OCI-LY7 (cell line): ENCODE measurements at regions of chr9 and their contacts with region 1.

Region 1: GRCh38 chr9:109903515-109904138 is 123.6 kb downstream of the PALM2AKAP2 start:
- DNase-seq: peak; percentile 92
- H3K4me3 ChIP-seq: no peak overlapping the region
- H3K27ac ChIP-seq: peak overlapping the region; percentile 98
- H3K4me1 ChIP-seq: peaks cover 57% of the 10 kb centered on the region
- CTCF ChIP-seq: peak; percentile 99

Region 2: GRCh38 chr9:109880277-109881169 is 23.1 kb before region 1 on chr9:
- CTCF ChIA-PET with region 1: no interaction called
- POLR2A ChIA-PET with region 1: no interaction called
- intact Hi-C with region 1: no loop called
- DNase-seq: peak; percentile 76
- H3K4me3 ChIP-seq: peak overlapping the region; percentile 25
- H3K27ac ChIP-seq: no peak overlapping the region
- H3K4me1 ChIP-seq: no peaks in the 10 kb centered on the region
- CTCF ChIP-seq: peak; percentile 85

Region 3: DNA sequence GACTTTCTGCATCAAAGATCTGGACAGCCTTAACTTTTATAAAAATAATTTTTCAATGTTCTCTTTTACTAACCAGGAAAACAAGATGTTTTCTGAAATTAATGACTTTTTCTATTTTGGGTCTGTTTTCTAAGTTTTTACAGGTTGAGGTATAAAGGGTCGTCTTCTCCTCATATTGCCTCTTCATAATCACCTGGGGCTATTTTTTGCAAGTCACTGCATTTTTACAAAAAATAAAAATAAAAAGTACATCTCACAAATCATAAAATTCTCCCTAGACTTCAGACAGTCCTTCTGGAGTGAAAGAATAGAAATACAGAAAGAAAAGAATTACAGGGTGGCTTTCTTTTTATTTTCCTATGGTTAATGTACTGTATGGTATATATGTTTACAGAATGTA is 44.8 kb after region 1 on chr9:
- CTCF ChIA-PET with region 1: interaction called, 4 read pairs
- POLR2A ChIA-PET with region 1: interaction called, 11 read pairs
- intact Hi-C with region 1: no loop called
- DNase-seq: no peak
- H3K4me3 ChIP-seq: no peak overlapping the region
- H3K27ac ChIP-seq: peak overlapping the region; percentile 40
- H3K4me1 ChIP-seq: peaks cover 61% of the 10 kb centered on the region
- CTCF ChIP-seq: no peak

Region 4: DNA sequence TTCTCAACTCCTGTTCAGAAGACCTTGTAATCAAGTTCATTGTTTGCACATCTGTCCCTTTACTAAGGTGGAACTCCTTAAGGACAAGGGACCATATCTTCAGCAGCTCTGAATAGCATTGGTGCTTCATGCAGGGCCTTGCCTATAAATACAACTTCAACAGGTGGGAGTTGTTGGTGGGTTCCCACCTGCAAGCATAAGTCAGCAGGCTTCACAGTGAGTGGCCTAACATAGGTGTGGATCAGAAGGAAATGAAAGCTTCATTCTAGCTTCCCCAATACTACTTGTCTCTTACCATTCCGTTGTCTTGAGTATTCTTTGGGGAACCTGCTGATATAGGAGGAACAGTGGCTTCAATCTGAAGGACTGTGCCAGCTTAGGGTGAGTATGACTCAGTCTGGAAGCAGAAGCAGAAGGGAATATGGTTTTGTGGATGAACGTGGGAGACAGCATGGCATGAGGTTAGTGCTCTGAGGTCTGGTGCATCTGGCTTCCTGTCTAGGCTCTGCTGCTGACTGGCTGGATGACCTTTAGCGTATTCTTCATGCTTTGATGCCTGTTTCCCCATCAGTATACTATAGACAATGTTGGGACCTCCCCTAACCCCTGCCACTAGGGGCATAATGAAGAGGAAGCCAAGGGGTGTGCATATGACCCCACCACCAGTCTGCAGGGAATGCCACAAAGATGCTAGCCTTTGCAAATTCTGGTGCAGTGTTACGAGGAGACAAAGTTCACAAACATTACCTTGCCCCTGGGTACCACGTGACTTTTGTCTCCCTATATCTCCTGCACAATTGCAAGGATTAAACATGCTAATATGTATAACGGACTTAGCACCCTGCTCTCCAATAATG is 68.6 kb after region 1 on chr9:
- CTCF ChIA-PET with region 1: interaction called, 16 read pairs
- POLR2A ChIA-PET with region 1: interaction called, 358 read pairs
- intact Hi-C with region 1: loop called (anchors 1 kb)
- DNase-seq: peak; percentile 94
- H3K4me3 ChIP-seq: peak overlapping the region; percentile 37
- H3K27ac ChIP-seq: peak overlapping the region; percentile 98
- H3K4me1 ChIP-seq: peaks cover 100% of the 10 kb centered on the region
- CTCF ChIP-seq: peak; percentile 87

Region 5: DNA sequence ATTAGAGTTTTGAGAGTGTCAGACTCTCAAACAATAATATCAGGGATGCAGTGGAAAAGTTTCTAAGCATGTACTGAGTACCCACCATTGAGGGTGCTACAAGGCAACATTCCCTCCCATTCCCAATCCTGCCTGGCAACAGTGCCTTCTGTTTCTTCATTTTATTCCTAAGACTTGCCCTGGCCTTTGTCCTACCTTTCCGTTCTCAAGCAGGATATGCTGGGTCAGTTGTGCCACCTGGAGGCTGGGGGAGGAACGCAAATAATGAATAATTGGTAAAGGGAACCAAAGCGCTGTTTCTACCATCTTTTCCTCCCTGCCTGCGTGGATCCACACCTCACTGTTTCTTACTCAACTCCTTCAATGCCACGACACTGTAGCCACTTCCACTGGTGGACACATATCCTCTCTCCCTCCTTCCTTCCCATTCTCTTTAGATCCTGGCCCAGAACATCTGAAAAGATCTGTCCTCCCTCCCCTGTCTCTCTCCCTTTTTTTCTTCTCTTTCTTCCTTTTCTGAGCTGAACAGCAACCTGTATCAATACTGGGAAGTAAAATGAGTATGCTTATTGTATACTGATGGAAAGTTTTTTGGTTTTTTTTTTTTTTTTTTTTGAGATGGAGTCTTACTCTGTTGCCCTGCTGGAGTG is 154.8 kb after region 1 on chr9:
- CTCF ChIA-PET with region 1: interaction called, 5 read pairs
- POLR2A ChIA-PET with region 1: interaction called, 14 read pairs
- intact Hi-C with region 1: loop called (anchors 1 kb)
- DNase-seq: peak; percentile 70
- H3K4me3 ChIP-seq: peak overlapping the region; percentile 23
- H3K27ac ChIP-seq: peak overlapping the region; percentile 48
- H3K4me1 ChIP-seq: peaks cover 44% of the 10 kb centered on the region
- CTCF ChIP-seq: peak; percentile 89

Region 6: DNA sequence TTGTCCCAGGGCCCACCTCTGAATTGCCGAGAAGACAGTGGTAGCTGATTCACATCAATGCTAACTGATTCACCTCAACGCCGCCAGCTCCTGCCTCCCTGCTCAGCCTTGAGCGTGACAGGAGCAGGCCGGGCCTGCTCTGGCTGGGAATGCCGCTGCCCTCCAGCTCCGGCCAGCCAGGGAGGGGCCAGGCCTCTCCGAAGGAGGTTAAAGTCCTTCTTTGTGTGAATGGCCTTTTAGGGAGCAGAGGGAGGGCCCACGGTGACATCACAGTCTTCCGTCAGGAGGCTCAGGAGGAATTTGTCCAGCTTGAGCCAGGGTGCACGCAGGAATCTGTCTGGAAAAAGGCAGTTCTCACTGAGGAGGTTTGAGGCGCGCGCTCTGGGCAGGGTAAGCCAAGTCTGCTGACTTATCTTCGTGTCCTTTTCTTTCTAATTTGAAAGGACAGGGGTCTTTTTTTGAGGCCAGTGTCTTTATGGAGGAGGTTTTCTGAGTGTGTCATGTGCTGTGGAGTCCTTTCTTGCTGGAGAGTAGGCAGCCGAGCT is 221.7 kb after region 1 on chr9:
- CTCF ChIA-PET with region 1: interaction called, 8 read pairs
- POLR2A ChIA-PET with region 1: interaction called, 12 read pairs
- intact Hi-C with region 1: no loop called
- DNase-seq: no peak
- H3K4me3 ChIP-seq: peak overlapping the region; percentile 57
- H3K27ac ChIP-seq: peak overlapping the region; percentile 95
- H3K4me1 ChIP-seq: peaks cover 100% of the 10 kb centered on the region
- CTCF ChIP-seq: no peak

Region 7: GRCh38 chr9:110152704-110153374 is 249.2 kb after region 1 on chr9:
- CTCF ChIA-PET with region 1: interaction called, 7 read pairs
- POLR2A ChIA-PET with region 1: interaction called, 215 read pairs
- intact Hi-C with region 1: loop called (anchors 1 kb)
- DNase-seq: peak; percentile 80
- H3K4me3 ChIP-seq: peak overlapping the region; percentile 79
- H3K27ac ChIP-seq: peak overlapping the region; percentile 97
- H3K4me1 ChIP-seq: peaks cover 85% of the 10 kb centered on the region
- CTCF ChIP-seq: peak; percentile 94